PC-9 (cell line): ENCODE measurements at regions of chr10 and their contacts with region 1.

Region 1: GRCh38 chr10:4981722-4982471 is 18.7 kb downstream of the AKR1C1 start:
- DNase-seq: peak; percentile 75 to 84
- H3K4me3 ChIP-seq: no peak overlapping the region
- H3K27ac ChIP-seq: peak overlapping the region; percentile 61
- H3K4me1 ChIP-seq: peaks cover 6% of the 10 kb centered on the region; the same call in 1 of the 2 replicates
- H3K27me3 ChIP-seq: no peaks in the 10 kb centered on the region
- CTCF ChIP-seq: peak; percentile 51

Region 2: GRCh38 chr10:5159126-5159525 is 177.2 kb after region 1 on chr10:
- CTCF ChIA-PET with region 1: no interaction called
- POLR2A ChIA-PET with region 1: no interaction called
- intact Hi-C with region 1: no loop called
- DNase-seq: peak in 1 of 2 experiments; percentile 37
- H3K4me3 ChIP-seq: no peak overlapping the region
- H3K27ac ChIP-seq: no peak overlapping the region
- H3K4me1 ChIP-seq: no peaks in the 10 kb centered on the region
- H3K27me3 ChIP-seq: no peaks in the 10 kb centered on the region
- CTCF ChIP-seq: no peak

Region 3: DNA sequence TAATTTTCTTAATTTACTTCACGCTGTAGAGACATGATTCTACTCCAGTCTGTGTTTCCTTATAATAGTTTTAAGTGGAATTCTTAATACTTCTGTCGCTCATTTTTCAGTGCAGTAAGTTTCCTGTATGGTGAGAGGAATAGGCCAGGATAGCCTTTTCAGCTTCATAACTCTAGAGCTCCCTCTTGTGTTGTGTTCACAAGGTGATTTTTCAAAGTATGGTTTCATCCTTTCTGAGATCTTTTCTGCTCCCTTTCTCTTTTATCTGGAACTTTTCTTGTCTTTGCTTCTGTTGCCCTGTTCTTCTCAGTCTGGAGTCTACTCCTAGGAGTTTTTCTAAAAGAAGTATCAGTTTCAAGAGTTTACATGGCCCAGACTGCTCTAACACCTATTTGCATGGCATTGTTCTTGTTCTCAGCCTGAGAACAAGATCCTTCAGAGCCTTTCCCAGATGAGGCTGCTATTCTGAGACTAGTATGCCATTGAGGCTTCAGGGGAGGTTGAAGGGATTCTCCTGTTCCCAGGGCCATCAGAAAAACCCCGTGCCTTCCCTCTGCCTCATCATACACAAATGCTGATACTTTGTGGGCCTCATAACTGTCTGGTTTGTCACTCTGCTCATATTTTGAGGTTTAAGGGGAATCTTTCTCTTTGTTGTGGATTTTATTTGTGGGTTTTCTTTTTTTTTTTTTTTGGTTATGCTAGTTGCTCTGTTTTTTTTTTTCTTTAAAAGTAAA is 452.3 kb after region 1 on chr10:
- CTCF ChIA-PET with region 1: no interaction called
- POLR2A ChIA-PET with region 1: no interaction called
- intact Hi-C with region 1: loop called (anchors 5 kb)
- DNase-seq: peak in 1 of 2 experiments; percentile 14
- H3K4me3 ChIP-seq: no peak overlapping the region
- H3K27ac ChIP-seq: peak overlapping the region; percentile 43
- H3K4me1 ChIP-seq: peaks cover 10% of the 10 kb centered on the region; the same call in 1 of the 2 replicates
- H3K27me3 ChIP-seq: no peaks in the 10 kb centered on the region
- CTCF ChIP-seq: peak; percentile 76

Region 4: GRCh38 chr10:5614155-5614721 is 632.3 kb after region 1 on chr10:
- CTCF ChIA-PET with region 1: no interaction called
- POLR2A ChIA-PET with region 1: no interaction called
- intact Hi-C with region 1: loop called (anchors 10 kb)
- DNase-seq: no peak
- H3K4me3 ChIP-seq: no peak overlapping the region
- H3K27ac ChIP-seq: no peak overlapping the region
- H3K4me1 ChIP-seq: peaks cover 49% of the 10 kb centered on the region
- H3K27me3 ChIP-seq: no peaks in the 10 kb centered on the region
- CTCF ChIP-seq: no peak

Region 5: DNA sequence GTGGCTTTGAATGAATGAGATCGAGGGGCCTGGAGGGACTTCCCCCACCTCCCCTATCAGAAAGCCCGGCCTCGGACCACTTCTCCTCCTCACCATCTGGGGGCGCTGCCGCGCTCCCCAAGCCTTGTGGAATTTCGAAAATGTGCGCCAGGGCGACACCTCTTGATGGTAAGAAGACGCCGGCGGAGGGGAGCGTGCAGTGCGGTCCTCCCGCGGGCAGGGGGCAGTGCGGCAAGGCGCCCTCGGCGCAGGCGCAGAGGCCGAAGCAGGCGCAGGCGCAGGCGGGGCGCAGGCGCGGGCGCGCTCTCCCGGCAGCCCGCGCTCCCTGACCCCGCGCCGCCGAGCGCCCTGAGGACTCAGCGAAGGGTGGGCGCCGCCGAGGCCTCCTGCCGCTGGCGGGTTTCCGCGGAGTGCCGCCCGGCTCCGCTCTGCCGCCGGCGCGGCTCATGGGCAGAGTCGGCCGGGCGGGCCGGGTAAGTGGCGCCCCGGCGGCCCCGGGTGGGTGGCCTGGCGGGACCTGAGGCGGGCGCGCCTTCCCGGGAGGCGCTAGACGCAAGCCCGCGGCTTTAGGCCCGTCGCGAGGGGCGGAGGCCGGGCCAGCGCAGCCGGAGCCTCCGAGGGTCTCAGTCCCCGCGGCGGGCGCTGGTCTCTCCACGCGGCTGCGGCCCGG is 1107.0 kb after region 1 on chr10 and contains the start of gene RBM17:
- CTCF ChIA-PET with region 1: no interaction called
- POLR2A ChIA-PET with region 1: no interaction called
- intact Hi-C with region 1: loop called (anchors 5 kb)
- DNase-seq: peak; percentile 69 to 97
- H3K4me3 ChIP-seq: peak within 1 kb of the TSS; percentile 71
- H3K27ac ChIP-seq: 0 out of 2 replicates have a peak within 1 kb of the TSS, but pooled peaks have one; percentile 19
- H3K4me1 ChIP-seq: peaks cover 16% of the 10 kb centered on the region
- H3K27me3 ChIP-seq: peaks cover 3% of the 10 kb centered on the region; the same call in 1 of the 2 replicates
- CTCF ChIP-seq: peak; percentile 97
- total RNA-seq, gene RBM17: 98.2 and 131 TPM in 2 replicates